ENCODE measurements at regions of chr15 and their contacts with region 1.

Region 1: GRCh38 chr15:57122080-57122840 is 203.8 kb downstream of the TCF12 start:
- DNase-seq: no peak
- H3K4me3 ChIP-seq: no peak overlapping the region
- H3K27ac ChIP-seq: no peak overlapping the region
- H3K27me3 ChIP-seq: no peaks in the 10 kb centered on the region
- CTCF ChIP-seq: no peak

Region 2: DNA sequence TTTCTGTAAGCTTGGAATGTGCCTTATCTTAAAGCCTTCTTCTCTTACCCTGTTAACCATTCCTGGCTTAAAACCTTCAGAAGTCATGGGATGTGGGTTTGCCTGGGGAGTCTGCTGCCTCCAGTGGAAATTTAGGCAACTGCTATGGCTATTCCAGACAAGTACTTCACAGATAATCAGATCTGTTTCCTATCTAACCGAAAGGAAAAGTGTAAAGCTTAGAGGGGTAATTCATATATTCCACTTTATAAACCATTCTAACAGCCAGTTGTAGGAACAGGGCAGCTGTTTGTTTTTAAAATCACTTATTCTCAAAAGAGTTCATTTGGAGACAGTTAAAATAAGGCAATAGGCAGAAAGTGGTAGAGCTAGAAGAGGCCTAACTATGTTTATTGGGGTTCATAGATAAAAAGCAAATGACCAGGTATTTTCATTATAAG is 16.1 kb after region 1 on chr15:
- CTCF ChIA-PET with region 1: interaction called, 13 read pairs
- POLR2A ChIA-PET with region 1: no interaction called
- DNase-seq: no peak
- H3K4me3 ChIP-seq: no peak overlapping the region
- H3K27ac ChIP-seq: no peak overlapping the region
- H3K27me3 ChIP-seq: no peaks in the 10 kb centered on the region
- CTCF ChIP-seq: peak; percentile 93

Region 3: GRCh38 chr15:57172925-57173324 is 50.7 kb after region 1 on chr15:
- CTCF ChIA-PET with region 1: no interaction called
- POLR2A ChIA-PET with region 1: no interaction called
- DNase-seq: no peak
- H3K4me3 ChIP-seq: no peak overlapping the region
- H3K27ac ChIP-seq: no peak overlapping the region
- H3K27me3 ChIP-seq: no peaks in the 10 kb centered on the region
- CTCF ChIP-seq: no peak